CD4-positive, alpha-beta memory T cell (primary cell): ENCODE measurements at regions of chr17 and their contacts with region 1.

Region 1: DNA sequence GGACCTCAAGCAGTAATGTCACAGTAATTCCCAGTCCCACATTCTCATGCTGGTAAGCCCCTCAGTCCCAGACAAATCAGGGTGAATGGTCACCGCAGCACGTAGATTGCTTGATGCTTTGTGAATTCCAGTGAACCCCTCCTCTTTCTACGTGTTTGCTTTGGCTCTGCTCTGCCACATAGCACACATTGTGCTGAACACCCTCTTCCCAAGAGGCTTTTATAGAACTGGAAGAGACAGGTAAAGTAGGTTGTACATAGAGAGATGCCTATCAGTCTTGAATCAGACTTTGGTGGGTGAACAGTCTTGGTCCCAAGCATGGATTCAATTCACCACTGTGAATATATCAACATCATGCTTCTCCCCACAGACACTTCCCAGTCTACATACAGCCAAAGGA is 579 bp upstream of the KRTAP9-6 start:
- DNase-seq: no peak
- H3K4me3 ChIP-seq: no peak overlapping the region
- H3K4me3 Mint-ChIP-seq: no peak overlapping the region
- H3K27ac ChIP-seq: no peak overlapping the region
- H3K27ac Mint-ChIP-seq: peak overlapping the region in 1 of 7 donors; percentile 1
- H3K4me1 ChIP-seq: no peaks in the 10 kb centered on the region
- H3K4me1 Mint-ChIP-seq: peaks cover 10 to 30% (median 15%) of the 10 kb centered on the region in 4 donors
- H3K27me3 ChIP-seq: no peaks in the 10 kb centered on the region
- H3K27me3 Mint-ChIP-seq: peaks cover 20 to 27% of the 10 kb centered on the region in 2 donors

Region 2: DNA sequence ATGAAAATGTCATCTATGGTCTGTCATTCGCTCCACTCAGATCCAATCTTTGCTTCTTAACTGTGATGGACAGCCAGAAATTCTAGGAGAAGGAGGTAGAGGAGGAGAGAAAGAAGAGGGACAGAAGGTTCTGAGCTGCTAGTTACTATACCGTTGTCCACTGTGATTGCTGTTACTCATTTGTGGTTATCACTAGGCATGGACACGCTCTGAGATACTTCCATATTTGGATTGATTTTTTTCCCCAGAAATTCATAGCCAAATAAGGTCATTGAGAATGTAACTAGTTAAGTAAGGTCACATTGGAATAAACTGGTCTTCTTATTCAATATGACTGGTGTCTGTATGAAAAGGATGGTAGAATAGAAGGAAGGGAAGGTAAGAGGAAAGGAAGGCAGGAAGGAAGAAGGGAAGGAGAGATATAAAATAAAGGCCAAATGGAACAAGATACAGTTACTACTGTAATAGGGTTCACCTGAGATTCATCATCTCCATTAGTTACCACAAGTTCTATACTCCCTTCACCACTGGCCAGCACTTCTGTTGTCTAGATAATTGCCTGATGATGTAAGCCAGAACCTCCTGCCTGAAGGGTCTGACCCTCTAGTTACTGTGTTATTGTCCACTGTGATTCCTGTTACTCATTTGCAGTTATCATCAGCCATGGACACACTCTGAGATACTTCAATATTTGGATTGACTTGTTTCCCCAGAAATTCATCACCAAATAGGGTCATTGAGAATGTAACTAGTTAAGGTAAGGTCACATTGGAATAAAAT is 13.8 kb after region 1 on chr17:
- CTCF ChIA-PET with region 1: no interaction called
- POLR2A ChIA-PET with region 1: no interaction called
- intact Hi-C with region 1: loop called (anchors 1 kb)
- DNase-seq: no peak
- H3K4me3 ChIP-seq: no peak overlapping the region
- H3K4me3 Mint-ChIP-seq: no peak overlapping the region
- H3K27ac ChIP-seq: no peak overlapping the region
- H3K27ac Mint-ChIP-seq: peak overlapping the region in 1 of 7 donors; percentile 33
- H3K4me1 ChIP-seq: no peaks in the 10 kb centered on the region
- H3K4me1 Mint-ChIP-seq: peaks cover under 1 to 2% (median 1%) of the 10 kb centered on the region in 4 donors
- H3K27me3 ChIP-seq: no peaks in the 10 kb centered on the region
- H3K27me3 Mint-ChIP-seq: peaks cover 16 to 19% of the 10 kb centered on the region in 2 donors